Activated naive CD4-positive, alpha-beta T cell treated with anti-CD3 and anti-CD28 coated beads for 36 hours (primary cell): ENCODE measurements at regions of chr2 and their contacts with region 1.

Region 1: DNA sequence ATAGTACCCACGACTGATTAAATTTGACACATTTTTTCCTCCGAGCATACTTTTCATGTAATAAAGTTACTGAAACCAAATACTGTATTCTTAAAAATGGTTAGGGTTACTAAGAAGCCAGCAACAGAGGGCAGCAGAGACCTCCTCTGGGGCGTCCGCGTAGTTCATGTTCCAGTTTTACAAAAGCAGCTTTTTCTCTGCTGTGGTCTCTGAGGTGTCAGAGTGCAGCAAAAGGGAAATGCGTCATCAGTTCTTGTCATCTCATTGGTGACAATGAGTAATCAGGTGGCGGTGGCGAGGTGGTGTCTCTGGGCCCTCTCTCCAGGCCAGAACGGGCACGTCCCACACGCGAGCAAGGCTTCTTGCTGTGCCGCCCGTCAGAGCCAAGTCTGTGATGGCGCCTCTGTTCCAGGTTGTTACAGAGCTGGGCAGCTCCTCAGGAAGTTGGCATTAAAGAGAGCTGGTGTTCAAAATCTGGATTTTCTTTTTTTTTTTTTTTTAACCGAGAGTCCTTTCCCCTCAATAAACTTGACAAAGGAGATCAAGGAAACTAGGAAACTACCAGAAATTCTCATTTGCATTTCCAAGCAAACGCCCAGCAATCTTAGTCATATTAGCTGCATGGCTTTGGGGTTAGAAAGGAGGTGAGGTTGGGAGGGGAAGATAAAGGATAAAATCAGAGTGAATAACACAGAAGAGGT is 98.6 kb upstream of the BZW1 start:
- DNase-seq: peak; percentile 96
- H3K4me3 Mint-ChIP-seq: peak overlapping the region; percentile 77
- H3K27ac Mint-ChIP-seq: peak overlapping the region; percentile 100
- H3K4me1 Mint-ChIP-seq: peaks cover 32% of the 10 kb centered on the region
- H3K27me3 Mint-ChIP-seq: no peaks in the 10 kb centered on the region

Region 2: DNA sequence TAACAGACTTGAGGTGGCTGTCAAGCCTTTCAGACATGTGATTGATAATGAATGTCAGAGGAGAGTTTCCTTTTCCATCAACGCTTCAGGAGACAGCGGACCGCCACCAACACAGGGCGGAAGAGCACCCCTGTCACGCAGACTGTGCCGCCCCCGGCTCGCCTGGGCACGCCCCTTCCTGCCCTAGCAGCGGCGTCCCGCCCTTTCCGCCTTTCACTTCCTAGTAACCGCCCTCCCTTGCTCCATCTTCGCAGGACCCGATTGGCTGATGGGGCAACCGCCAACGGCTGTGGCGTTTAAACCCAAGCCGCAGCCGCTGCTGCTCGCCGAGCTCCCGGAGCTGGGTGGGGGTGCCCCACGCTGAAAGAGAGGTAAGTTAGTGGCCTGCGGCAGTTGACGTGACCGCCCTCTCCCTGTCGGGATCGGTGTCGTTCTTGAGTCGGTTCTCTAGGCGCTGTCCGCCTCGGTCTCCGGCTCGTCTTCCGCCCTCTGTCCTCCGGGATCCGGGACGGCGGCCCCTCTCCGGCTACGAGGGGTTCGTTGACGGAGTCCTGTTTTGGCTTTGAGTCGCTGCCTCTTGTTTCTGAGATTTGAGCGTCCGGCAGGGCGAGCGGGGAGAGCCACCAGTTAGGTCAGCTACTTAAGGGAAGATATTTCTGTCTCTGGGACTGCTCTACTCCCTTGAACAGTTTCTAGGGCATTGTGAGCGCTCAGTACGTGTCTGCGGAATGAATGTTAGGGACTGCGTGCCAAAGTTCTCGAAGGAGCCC is 187.1 kb before region 1 on chr2 and contains the start of gene SGO2:
- CTCF ChIA-PET with region 1: no interaction called
- intact Hi-C with region 1: loop called (anchors 1 kb)
- DNase-seq: peak; percentile 98
- H3K4me3 Mint-ChIP-seq: peak within 1 kb of the TSS; percentile 90
- H3K27ac Mint-ChIP-seq: peak within 1 kb of the TSS; percentile 84
- H3K4me1 Mint-ChIP-seq: peaks cover 17% of the 10 kb centered on the region
- H3K27me3 Mint-ChIP-seq: no peaks in the 10 kb centered on the region
- total RNA-seq, gene SGO2: 39.7 to 40.0 TPM

Region 3: GRCh38 chr2:200677721-200678585 is 35.2 kb before region 1 on chr2:
- CTCF ChIA-PET with region 1: no interaction called
- intact Hi-C with region 1: no loop called
- DNase-seq: no peak
- H3K4me3 Mint-ChIP-seq: no peak overlapping the region
- H3K27ac Mint-ChIP-seq: no peak overlapping the region
- H3K4me1 Mint-ChIP-seq: peaks cover 8% of the 10 kb centered on the region
- H3K27me3 Mint-ChIP-seq: peaks cover 4% of the 10 kb centered on the region

Region 4: GRCh38 chr2:200735061-200735460 is 21.9 kb after region 1 on chr2:
- CTCF ChIA-PET with region 1: interaction called, 11 read pairs
- intact Hi-C with region 1: loop called (anchors 1 kb)
- DNase-seq: peak; percentile 55
- H3K4me3 Mint-ChIP-seq: no peak overlapping the region
- H3K27ac Mint-ChIP-seq: no peak overlapping the region
- H3K4me1 Mint-ChIP-seq: peaks cover 13% of the 10 kb centered on the region
- H3K27me3 Mint-ChIP-seq: peaks cover 9% of the 10 kb centered on the region

Region 5: DNA sequence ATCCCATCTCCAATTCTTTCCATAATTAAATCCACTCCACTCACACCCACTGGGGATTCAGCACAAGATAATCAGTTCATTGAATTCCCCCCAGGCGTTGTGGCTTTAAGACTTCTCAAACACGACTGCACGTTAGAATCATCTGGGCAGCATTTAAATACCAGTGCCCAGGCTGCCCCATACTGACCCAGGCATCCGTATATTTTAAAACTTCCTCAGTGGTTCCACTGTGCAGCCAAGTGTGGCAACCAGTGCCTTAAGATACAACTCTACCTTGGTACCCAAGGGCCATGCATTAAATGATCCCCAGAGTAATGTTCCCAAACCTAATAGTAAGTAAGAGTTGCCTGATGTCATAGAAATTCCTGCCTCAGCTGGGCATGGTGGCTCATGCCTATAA is 44.2 kb after region 1 on chr2:
- CTCF ChIA-PET with region 1: no interaction called
- intact Hi-C with region 1: no loop called
- DNase-seq: no peak
- H3K4me3 Mint-ChIP-seq: no peak overlapping the region
- H3K27ac Mint-ChIP-seq: no peak overlapping the region
- H3K4me1 Mint-ChIP-seq: peaks cover 5% of the 10 kb centered on the region
- H3K27me3 Mint-ChIP-seq: peaks cover 6% of the 10 kb centered on the region

Region 6: DNA sequence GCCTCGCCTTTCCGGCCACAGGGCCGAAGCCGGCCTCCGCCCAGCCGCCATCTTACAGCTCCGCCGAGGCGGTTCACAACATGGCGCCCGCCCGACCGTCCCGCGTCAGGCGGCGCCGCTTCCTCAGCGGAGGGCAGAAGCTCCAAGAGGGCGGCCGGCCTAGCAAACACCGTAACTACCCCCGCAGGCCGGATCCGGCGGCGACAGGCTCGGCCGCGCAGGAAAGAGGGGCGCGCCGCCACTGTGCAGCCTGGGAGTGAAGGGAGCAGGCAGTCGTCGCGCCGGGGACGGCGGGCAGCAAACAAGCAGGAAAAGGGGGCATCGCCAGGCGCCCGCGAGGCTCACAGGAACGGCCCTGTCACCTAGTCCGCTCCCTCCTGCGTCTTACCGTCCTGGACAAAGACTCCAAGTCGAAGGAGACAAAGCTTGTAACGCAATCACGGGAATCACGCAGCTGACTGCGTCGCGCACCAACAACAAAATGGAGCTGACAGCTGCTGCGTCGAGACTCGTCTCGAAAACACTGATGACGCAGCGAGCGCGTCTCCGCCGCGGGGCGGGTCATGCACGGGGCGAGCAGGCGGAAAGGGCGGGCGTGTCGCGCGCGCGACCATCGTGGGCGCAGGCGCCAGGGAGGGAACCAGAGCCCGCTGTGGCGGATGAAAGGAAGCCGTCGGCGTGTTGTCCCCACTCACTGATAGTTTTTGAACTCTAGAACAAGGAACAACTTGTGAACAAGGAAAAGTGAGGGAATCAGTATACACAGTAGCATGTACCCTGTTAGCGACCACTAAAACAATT is 151.2 kb after region 1 on chr2 and contains the start of gene CLK1:
- CTCF ChIA-PET with region 1: interaction called, 3 read pairs
- intact Hi-C with region 1: loop called (anchors 1 kb)
- DNase-seq: peak; percentile 98
- H3K4me3 Mint-ChIP-seq: peak within 1 kb of the TSS; percentile 98
- H3K27ac Mint-ChIP-seq: peak within 1 kb of the TSS; percentile 100
- H3K4me1 Mint-ChIP-seq: peaks cover 32% of the 10 kb centered on the region
- H3K27me3 Mint-ChIP-seq: no peaks in the 10 kb centered on the region
- total RNA-seq, gene CLK1: 174 to 196 TPM

Region 7: GRCh38 chr2:201071479-201072200 is 358.5 kb after region 1 on chr2 and contains the starts of genes HYCC2 and NDUFB3:
- CTCF ChIA-PET with region 1: interaction called, 3 read pairs
- intact Hi-C with region 1: loop called (anchors 1 kb)
- DNase-seq: peak; percentile 96
- H3K4me3 Mint-ChIP-seq: peak within 1 kb of the TSS; percentile 96
- H3K27ac Mint-ChIP-seq: peak within 1 kb of the TSS; percentile 92
- H3K4me1 Mint-ChIP-seq: peaks cover 51% of the 10 kb centered on the region
- H3K27me3 Mint-ChIP-seq: no peaks in the 10 kb centered on the region
- total RNA-seq, gene HYCC2: 19.1 TPM
- total RNA-seq, gene NDUFB3: 159 to 162 TPM

Region 8: DNA sequence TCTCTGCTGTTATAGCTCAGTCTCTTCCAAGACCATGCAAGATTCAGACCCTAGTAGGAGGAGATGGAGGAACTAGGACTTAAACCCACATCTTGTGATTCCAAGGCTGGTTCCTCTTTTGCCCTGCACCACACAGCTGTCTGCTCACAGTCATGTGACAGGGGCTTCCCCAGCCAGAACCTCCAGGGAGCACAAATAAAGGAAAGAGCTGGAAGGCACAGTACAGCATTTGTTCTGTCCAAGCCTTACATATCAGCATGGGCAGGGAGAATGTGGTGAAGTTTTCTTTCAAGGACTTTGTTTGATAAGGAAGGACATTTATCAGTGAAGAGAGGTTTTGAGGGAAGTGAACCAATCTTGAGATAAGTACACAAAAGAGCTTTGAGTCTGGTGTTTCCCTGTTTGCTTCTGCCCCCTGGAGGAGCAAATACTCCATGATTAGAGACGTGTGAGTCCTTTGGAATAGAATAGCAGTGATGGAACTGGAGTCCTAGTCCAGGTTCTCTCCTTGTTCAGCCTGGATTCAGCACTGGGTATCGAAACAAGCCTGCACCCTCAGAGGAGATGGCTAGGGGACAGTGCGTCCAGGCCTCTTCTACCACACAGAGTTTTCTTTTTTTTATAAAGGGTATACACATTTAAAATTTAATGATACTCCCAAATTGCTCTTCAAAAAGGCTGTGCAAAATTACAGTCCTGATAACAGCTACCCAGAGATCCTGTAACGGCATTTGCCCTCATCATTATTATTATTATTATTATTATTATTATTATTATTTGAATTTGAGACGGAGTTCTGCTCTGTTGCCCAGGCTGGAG is 445.2 kb after region 1 on chr2:
- CTCF ChIA-PET with region 1: no interaction called
- intact Hi-C with region 1: loop called (anchors 1 kb)
- DNase-seq: peak; percentile 76
- H3K4me3 Mint-ChIP-seq: no peak overlapping the region
- H3K27ac Mint-ChIP-seq: peak overlapping the region; percentile 86
- H3K4me1 Mint-ChIP-seq: peaks cover 24% of the 10 kb centered on the region
- H3K27me3 Mint-ChIP-seq: no peaks in the 10 kb centered on the region